Endothelial cell of umbilical vein (primary cell): ENCODE measurements at regions of chr4 and their contacts with region 1.

Region 1: DNA sequence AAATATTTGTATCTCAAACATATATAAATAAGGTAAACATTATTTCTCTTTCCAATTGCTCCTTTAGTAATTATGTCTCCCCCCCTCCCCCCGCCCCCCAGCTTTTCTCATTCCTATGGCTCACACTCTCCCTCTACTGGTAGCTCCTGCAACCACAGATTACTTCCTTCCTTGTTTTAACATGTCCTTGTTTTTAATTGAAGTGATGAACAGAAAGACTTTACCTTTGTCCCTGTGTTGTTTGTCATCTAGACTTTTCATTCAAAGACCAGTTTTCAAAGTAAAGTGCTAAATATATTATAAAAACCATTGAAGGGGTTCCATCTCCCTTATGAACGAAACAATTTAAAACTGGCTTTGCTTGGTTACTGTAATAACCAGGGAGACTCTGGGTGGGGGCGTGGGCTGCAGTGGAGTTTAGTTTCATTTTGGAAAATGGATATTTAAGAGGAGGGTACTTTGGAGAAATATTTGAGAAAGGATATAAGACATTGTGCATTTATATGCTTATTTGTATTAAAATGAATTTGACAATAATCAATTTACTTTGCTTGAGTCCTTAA is 352.9 kb downstream of the RAPGEF2 start:
- DNase-seq: peak; percentile 63
- H3K4me3 ChIP-seq: peak overlapping the region in 1 of 3 experiments; percentile 40
- H3K27ac ChIP-seq: no peak overlapping the region
- H3K4me1 ChIP-seq: no peaks in the 10 kb centered on the region
- H3K27me3 ChIP-seq: peaks cover 0 to 2% of the 10 kb centered on the region in 2 experiments
- CTCF ChIP-seq: peak; percentile 67
- POLR2A ChIP-seq: no peak

Region 2: GRCh38 chr4:158710814-158711213 is 744.9 kb before region 1 on chr4:
- CTCF ChIA-PET with region 1: interaction called, 10 read pairs
- POLR2A ChIA-PET with region 1: no interaction called
- dilution Hi-C with region 1: no loop called
- intact Hi-C with region 1: no loop called
- DNase-seq: peak; percentile 31
- H3K4me3 ChIP-seq: no peak overlapping the region
- H3K27ac ChIP-seq: no peak overlapping the region
- H3K4me1 ChIP-seq: no peaks in the 10 kb centered on the region
- H3K27me3 ChIP-seq: no peaks in the 10 kb centered on the region
- CTCF ChIP-seq: peak; percentile 12 to 17
- POLR2A ChIP-seq: no peak

Region 3: DNA sequence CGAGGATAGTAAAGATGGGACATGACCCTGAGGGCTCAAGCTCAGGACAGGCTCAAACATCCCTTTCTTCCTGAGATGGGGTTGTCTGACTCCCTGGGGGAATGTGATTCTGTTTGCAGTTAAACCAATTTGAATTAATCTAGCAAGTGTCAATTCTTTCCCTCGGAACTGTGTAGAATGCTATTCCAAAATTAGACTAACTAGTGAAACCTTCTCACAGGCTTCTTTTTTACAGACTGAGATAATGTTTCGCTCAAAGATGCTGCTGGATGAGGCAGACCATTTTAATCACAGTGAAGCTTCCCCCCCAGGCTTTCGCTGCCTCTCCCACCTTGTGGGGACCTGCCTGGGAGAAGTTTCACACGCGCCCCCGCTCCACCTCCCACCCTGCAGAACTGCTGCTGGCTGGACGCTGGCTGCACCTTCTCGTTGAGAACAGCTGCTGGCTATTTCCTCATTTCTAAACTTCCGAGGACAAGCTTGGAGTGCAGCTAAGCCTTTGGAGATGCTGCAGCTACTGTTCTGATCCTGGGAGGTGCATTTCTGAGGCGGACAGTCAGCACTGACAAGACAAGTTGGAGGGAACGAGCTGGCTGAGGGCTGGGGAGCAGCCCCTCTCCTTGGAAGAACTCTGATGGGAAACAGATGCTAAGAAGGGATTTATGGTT is 55.1 kb before region 1 on chr4:
- CTCF ChIA-PET with region 1: no interaction called
- POLR2A ChIA-PET with region 1: no interaction called
- dilution Hi-C with region 1: no loop called
- intact Hi-C with region 1: no loop called
- DNase-seq: no peak
- H3K4me3 ChIP-seq: no peak overlapping the region
- H3K27ac ChIP-seq: no peak overlapping the region
- H3K4me1 ChIP-seq: peaks cover 21% of the 10 kb centered on the region
- H3K27me3 ChIP-seq: no peaks in the 10 kb centered on the region
- CTCF ChIP-seq: no peak
- POLR2A ChIP-seq: no peak